Prostate gland (tissue), 2 donors: ENCODE measurements at regions of chr5 and their contacts with region 1.

Region 1: GRCh38 chr5:54229041-54229780 is 81.2 kb downstream of the ARL15 start:
- DNase-seq: peak; percentile 46
- H3K4me3 ChIP-seq: no peak overlapping the region
- H3K27ac ChIP-seq: no peak overlapping the region
- H3K4me1 ChIP-seq: no peaks in the 10 kb centered on the region
- H3K27me3 ChIP-seq: no peaks in the 10 kb centered on the region
- CTCF ChIP-seq: peak; percentile 77 to 89 (median 82)
- POLR2A ChIP-seq: no peak

Region 2: DNA sequence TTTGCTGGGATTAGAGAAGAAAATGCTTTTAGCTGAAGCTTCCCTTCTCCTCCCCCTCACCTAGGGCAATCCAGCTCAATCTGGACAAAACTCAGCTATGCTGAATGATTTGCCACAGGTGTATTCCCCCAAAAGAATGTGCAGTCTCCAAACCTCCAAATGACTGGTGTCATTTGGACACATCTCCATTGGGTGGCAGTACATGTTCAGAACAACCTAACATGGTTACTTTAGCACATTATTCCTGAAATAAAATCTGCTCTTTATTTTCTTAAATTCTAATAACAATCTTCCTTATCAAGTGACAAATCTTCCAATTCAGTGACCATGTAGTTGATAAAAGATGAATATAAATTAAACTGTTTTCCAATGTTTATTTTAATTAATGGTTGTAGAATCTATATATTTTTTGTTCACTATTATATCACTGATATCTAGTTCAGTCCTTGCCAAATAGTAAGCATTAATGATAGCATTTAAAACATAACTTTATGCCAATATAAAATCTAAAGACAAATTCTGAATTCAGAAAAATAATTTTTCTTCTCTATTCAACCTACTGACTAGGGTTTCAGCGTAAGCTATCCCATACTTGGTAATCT is 1058.4 kb before region 1 on chr5:
- intact Hi-C with region 1: loop called (anchors 5 kb)
- DNase-seq: no peak
- H3K4me3 ChIP-seq: no peak overlapping the region
- H3K27ac ChIP-seq: no peak overlapping the region
- H3K4me1 ChIP-seq: no peaks in the 10 kb centered on the region
- H3K27me3 ChIP-seq: no peaks in the 10 kb centered on the region
- CTCF ChIP-seq: peak in 3 of 4 experiments; percentile 27 to 57 (median 51)
- POLR2A ChIP-seq: no peak

Region 3: GRCh38 chr5:53557386-53557785 is 671.8 kb before region 1 on chr5:
- intact Hi-C with region 1: loop called (anchors 10 kb)
- DNase-seq: no peak
- H3K4me3 ChIP-seq: no peak overlapping the region
- H3K27ac ChIP-seq: no peak overlapping the region
- H3K4me1 ChIP-seq: no peaks in the 10 kb centered on the region
- H3K27me3 ChIP-seq: peaks cover 2% of the 10 kb centered on the region
- CTCF ChIP-seq: no peak
- POLR2A ChIP-seq: no peak

Region 4: GRCh38 chr5:53934151-53934820 is 294.9 kb before region 1 on chr5:
- intact Hi-C with region 1: no loop called
- DNase-seq: no peak
- H3K4me3 ChIP-seq: no peak overlapping the region
- H3K27ac ChIP-seq: no peak overlapping the region
- H3K4me1 ChIP-seq: no peaks in the 10 kb centered on the region
- H3K27me3 ChIP-seq: no peaks in the 10 kb centered on the region
- CTCF ChIP-seq: no peak
- POLR2A ChIP-seq: no peak

Region 5: DNA sequence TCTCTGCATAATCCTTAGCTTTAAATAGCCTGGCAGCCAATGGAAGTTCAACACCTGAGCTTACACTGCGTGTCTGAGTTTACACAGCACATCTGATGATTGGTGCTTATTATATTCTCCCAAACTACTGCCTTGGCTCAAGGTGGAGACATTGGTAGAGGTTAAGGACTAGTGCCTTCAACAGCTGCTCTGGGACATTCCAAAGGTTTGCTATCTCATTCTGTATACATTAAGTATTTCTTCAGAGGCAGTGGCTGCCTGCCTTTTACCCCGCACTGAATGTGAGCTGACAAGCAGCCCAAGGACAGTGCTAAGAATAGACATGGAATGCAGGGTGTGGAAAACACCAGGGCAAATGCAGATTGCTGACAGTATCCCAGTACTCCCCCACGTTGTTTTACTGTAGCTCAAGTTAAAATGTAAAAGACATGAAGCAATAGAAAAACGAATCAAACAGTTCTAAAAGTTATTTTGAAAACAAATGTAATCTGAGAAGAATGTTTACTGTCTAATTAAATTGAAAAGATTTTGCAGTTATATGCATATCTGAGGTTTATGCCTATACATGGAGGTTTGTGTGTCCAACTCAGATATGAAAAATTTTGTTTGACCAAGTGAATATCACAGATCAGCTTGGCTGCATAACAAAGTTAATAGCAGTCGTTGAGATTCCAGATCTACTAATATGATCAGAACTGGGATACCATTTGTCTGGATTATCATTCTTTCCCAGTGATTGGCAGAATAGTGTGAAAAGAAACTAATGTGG is 228.1 kb after region 1 on chr5:
- intact Hi-C with region 1: no loop called
- DNase-seq: no peak
- H3K4me3 ChIP-seq: no peak overlapping the region
- H3K27ac ChIP-seq: no peak overlapping the region
- H3K4me1 ChIP-seq: peaks cover 5% of the 10 kb centered on the region
- H3K27me3 ChIP-seq: no peaks in the 10 kb centered on the region
- CTCF ChIP-seq: no peak
- POLR2A ChIP-seq: no peak